ENCODE measurements at regions of chr7 and their contacts with region 1.

Region 1: DNA sequence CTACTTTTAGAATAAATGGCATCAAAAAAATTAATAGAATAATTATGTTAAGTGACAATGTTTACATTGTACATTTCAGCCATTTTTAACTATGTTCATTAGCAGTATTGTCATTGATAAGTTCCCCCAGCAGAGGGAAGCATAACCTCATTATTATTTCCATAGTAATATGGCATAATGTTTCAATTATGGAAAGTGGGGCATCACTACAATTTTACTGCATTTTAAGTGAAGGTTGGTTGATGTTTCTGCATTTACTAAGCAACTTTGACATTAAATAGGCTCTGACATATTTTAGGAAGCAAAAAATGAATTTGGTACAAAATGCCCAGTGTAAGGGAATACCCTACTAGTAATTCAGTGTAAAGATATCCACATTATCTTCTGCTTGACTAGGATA is 218.3 kb downstream of the SEMA3A start:
- DNase-seq: no peak
- ATAC-seq: no peak
- H3K4me3 Mint-ChIP-seq: no peak overlapping the region
- H3K27ac Mint-ChIP-seq: no peak overlapping the region
- H3K4me1 Mint-ChIP-seq: no peaks in the 10 kb centered on the region
- H3K27me3 Mint-ChIP-seq: no peaks in the 10 kb centered on the region

Region 2: GRCh38 chr7:83957333-83957732 is 19.0 kb before region 1 on chr7:
- CTCF ChIA-PET with region 1: no interaction called
- POLR2A ChIA-PET with region 1: no interaction called
- intact Hi-C with region 1: no loop called
- DNase-seq: no peak
- ATAC-seq: no peak
- H3K4me3 Mint-ChIP-seq: no peak overlapping the region
- H3K27ac Mint-ChIP-seq: no peak overlapping the region
- H3K4me1 Mint-ChIP-seq: no peaks in the 10 kb centered on the region
- H3K27me3 Mint-ChIP-seq: peaks cover 2% of the 10 kb centered on the region

Region 3: GRCh38 chr7:84188786-84189405 is 212.6 kb after region 1 on chr7:
- CTCF ChIA-PET with region 1: no interaction called
- POLR2A ChIA-PET with region 1: no interaction called
- intact Hi-C with region 1: loop called (anchors 5 kb)
- DNase-seq: no peak
- ATAC-seq: no peak
- H3K4me3 Mint-ChIP-seq: no peak overlapping the region
- H3K27ac Mint-ChIP-seq: no peak overlapping the region
- H3K4me1 Mint-ChIP-seq: peaks cover 21% of the 10 kb centered on the region
- H3K27me3 Mint-ChIP-seq: no peaks in the 10 kb centered on the region

Region 4: GRCh38 chr7:84364708-84365107 is 388.4 kb after region 1 on chr7:
- CTCF ChIA-PET with region 1: no interaction called
- POLR2A ChIA-PET with region 1: no interaction called
- intact Hi-C with region 1: loop called in 1 of 2 experiments (anchors 10 kb)
- DNase-seq: no peak
- ATAC-seq: no peak
- H3K4me3 Mint-ChIP-seq: no peak overlapping the region
- H3K27ac Mint-ChIP-seq: no peak overlapping the region
- H3K4me1 Mint-ChIP-seq: no peaks in the 10 kb centered on the region
- H3K27me3 Mint-ChIP-seq: peaks cover 2% of the 10 kb centered on the region

Region 5: DNA sequence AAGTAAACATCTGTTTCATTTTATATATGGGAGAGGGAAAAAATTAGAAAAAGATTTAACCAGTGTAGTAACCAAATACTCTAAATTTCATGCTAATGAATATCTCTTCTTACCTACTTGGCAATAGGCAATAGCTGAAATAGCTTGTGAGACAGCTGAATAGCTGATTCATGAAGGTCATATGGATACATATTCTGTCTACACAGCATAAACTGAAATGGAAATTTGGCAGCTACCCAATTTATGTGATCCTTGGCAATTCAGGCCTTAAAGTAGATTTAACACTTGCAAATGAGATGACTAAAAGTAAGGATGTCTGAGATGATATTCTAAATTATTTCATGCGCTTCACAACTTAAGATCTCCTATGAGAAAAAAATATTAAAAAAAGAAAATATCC is 479.5 kb after region 1 on chr7:
- CTCF ChIA-PET with region 1: no interaction called
- POLR2A ChIA-PET with region 1: no interaction called
- intact Hi-C with region 1: loop called (anchors 2 to 10 kb)
- DNase-seq: no peak
- ATAC-seq: no peak
- H3K4me3 Mint-ChIP-seq: no peak overlapping the region
- H3K27ac Mint-ChIP-seq: no peak overlapping the region
- H3K4me1 Mint-ChIP-seq: no peaks in the 10 kb centered on the region
- H3K27me3 Mint-ChIP-seq: no peaks in the 10 kb centered on the region

Region 6: GRCh38 chr7:85023045-85023712 is 1046.9 kb after region 1 on chr7:
- CTCF ChIA-PET with region 1: interaction called, 5 read pairs
- POLR2A ChIA-PET with region 1: interaction called, 3 read pairs
- intact Hi-C with region 1: loop called (anchors 1 kb)
- DNase-seq: peak; percentile 18
- ATAC-seq: no peak
- H3K4me3 Mint-ChIP-seq: no peak overlapping the region
- H3K27ac Mint-ChIP-seq: no peak overlapping the region
- H3K4me1 Mint-ChIP-seq: no peaks in the 10 kb centered on the region
- H3K27me3 Mint-ChIP-seq: peaks cover 3% of the 10 kb centered on the region

Region 7: GRCh38 chr7:85554236-85555178 is 1578.2 kb after region 1 on chr7:
- CTCF ChIA-PET with region 1: no interaction called
- POLR2A ChIA-PET with region 1: no interaction called
- intact Hi-C with region 1: loop called in 1 of 2 experiments (anchors 5 kb)
- DNase-seq: peak; percentile 5
- ATAC-seq: no peak
- H3K4me3 Mint-ChIP-seq: no peak overlapping the region
- H3K27ac Mint-ChIP-seq: no peak overlapping the region
- H3K4me1 Mint-ChIP-seq: no peaks in the 10 kb centered on the region
- H3K27me3 Mint-ChIP-seq: no peaks in the 10 kb centered on the region

Measured in activated CD4-positive, alpha-beta T cell treated with anti-CD3 and anti-CD28 coated beads for 36 hours (primary cell).